PC-3 (cell line): ENCODE measurements at regions of chr12 and their contacts with region 1.

Region 1: GRCh38 chr12:101982307-101982706 is 79.5 kb downstream of the WASHC3 start:
- DNase-seq: no peak
- ATAC-seq: no peak
- H3K4me3 ChIP-seq: no peak overlapping the region
- H3K27ac ChIP-seq: no peak overlapping the region
- H3K4me1 ChIP-seq: no peaks in the 10 kb centered on the region
- H3K27me3 ChIP-seq: peaks cover 64% of the 10 kb centered on the region
- CTCF ChIP-seq: no peak

Region 2: GRCh38 chr12:101995684-101996083 is 13.4 kb after region 1 on chr12:
- CTCF ChIA-PET with region 1: no interaction called
- POLR2A ChIA-PET with region 1: no interaction called
- intact Hi-C with region 1: loop called (anchors 1 kb)
- DNase-seq: no peak
- ATAC-seq: no peak
- H3K4me3 ChIP-seq: no peak overlapping the region
- H3K27ac ChIP-seq: no peak overlapping the region
- H3K4me1 ChIP-seq: no peaks in the 10 kb centered on the region
- H3K27me3 ChIP-seq: 0 out of 2 replicates have a peak, but pooled peaks cover 5% of the 10 kb centered on the region
- CTCF ChIP-seq: no peak